ENCODE measurements at regions of chr10 and their contacts with region 1.

Region 1: GRCh38 chr10:62816331-62817120 is at the start of gene EGR2:
- DNase-seq: peak; percentile 97
- H3K4me3 Mint-ChIP-seq: peak within 1 kb of the TSS; percentile 88
- H3K27ac Mint-ChIP-seq: peak within 1 kb of the TSS; percentile 100
- H3K4me1 Mint-ChIP-seq: peaks cover 40% of the 10 kb centered on the region
- H3K27me3 Mint-ChIP-seq: peaks cover 21% of the 10 kb centered on the region
- total RNA-seq, gene EGR2: 66.9 to 68.2 TPM

Region 2: GRCh38 chr10:62437696-62438095 is 378.8 kb before region 1 on chr10:
- CTCF ChIA-PET with region 1: interaction called, 12 read pairs
- POLR2A ChIA-PET with region 1: interaction called, 4 read pairs
- intact Hi-C with region 1: loop called (anchors 2 kb)
- DNase-seq: no peak
- H3K4me3 Mint-ChIP-seq: no peak overlapping the region
- H3K27ac Mint-ChIP-seq: no peak overlapping the region
- H3K4me1 Mint-ChIP-seq: peaks cover 20% of the 10 kb centered on the region
- H3K27me3 Mint-ChIP-seq: peaks cover 3% of the 10 kb centered on the region

Region 3: DNA sequence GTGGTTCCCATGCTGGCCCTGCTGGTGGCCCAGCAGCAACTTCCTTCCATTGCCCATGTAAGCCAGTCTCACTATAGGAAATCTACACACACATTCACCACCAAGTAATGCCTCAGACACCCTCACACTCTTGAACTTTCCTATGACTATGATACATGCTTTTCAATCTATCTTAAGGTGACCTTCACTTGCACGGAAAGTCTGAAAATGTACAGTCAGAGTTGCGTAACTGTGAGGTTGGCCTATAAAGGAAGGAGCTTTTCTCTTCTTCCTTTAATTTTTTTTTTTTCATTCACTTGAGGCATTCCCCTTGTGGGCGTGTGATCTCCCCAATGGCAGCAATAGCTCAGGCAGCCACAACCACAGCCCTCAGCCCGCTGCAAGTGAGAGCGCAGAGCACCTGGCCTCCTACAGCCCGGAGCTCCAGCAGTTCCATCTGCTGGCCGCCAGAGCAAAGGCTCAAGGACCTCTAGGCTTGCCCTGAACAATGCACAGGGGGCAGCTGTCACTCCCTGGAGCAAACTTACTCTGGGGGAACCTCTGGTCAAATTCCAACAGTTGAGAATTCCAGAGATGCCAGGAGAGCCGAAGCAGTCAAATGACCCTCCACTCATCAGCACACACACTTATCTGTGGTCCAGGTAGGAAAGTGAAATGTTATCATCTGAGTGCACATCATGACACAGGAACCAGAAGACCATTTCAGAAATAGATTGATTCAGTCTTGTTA is 135.2 kb before region 1 on chr10:
- CTCF ChIA-PET with region 1: interaction called, 31 read pairs
- POLR2A ChIA-PET with region 1: interaction called, 12 read pairs
- intact Hi-C with region 1: loop called (anchors 1 kb)
- DNase-seq: peak; percentile 92
- H3K4me3 Mint-ChIP-seq: no peak overlapping the region
- H3K27ac Mint-ChIP-seq: peak overlapping the region; percentile 74
- H3K4me1 Mint-ChIP-seq: peaks cover 33% of the 10 kb centered on the region
- H3K27me3 Mint-ChIP-seq: peaks cover 2% of the 10 kb centered on the region

Region 4: DNA sequence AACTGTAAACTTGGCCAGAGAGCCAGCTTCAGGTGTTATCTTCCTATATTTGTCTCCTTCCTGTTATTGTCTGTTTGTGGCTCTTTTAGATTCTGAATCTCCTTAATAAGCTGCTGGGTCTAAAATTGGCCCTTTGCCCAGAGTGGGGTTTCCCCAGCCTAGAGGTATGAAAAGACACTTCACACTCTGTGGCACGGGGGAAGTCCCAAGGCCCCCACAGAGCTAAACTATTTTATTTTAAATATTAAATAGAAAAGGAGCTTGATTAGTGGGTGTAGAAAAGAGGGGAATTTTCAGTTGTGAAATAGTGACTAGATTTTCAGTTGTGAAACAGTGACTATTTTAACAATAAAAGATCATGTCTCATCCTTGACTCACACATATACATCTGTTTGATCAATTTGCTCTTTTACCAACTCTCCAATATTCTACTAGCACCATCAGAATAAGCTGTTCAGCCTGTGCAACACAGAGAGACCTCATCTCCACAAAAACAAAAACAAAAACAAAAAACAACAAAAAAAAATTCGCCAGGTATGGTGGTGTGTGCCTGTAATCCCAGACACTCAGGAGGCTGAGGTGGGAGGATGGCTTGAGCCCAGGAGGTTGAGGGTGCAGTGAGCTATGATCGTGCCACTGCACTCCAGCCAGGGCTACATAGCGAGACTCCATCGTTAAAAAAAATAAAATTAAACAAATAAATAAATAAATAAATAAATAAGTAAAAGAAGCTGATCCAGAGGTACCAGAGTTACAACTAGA is 36.9 kb before region 1 on chr10:
- CTCF ChIA-PET with region 1: interaction called, 12 read pairs
- POLR2A ChIA-PET with region 1: interaction called, 7 read pairs
- intact Hi-C with region 1: loop called (anchors 1 kb)
- DNase-seq: peak; percentile 89
- H3K4me3 Mint-ChIP-seq: no peak overlapping the region
- H3K27ac Mint-ChIP-seq: no peak overlapping the region
- H3K4me1 Mint-ChIP-seq: peaks cover 22% of the 10 kb centered on the region
- H3K27me3 Mint-ChIP-seq: peaks cover 1% of the 10 kb centered on the region

Region 5: GRCh38 chr10:62870866-62871265 is 54.3 kb after region 1 on chr10:
- CTCF ChIA-PET with region 1: no interaction called
- POLR2A ChIA-PET with region 1: no interaction called
- intact Hi-C with region 1: loop called (anchors 2 kb)
- DNase-seq: peak; percentile 68
- H3K4me3 Mint-ChIP-seq: no peak overlapping the region
- H3K27ac Mint-ChIP-seq: no peak overlapping the region
- H3K4me1 Mint-ChIP-seq: peaks cover 30% of the 10 kb centered on the region
- H3K27me3 Mint-ChIP-seq: peaks cover 16% of the 10 kb centered on the region

Region 6: DNA sequence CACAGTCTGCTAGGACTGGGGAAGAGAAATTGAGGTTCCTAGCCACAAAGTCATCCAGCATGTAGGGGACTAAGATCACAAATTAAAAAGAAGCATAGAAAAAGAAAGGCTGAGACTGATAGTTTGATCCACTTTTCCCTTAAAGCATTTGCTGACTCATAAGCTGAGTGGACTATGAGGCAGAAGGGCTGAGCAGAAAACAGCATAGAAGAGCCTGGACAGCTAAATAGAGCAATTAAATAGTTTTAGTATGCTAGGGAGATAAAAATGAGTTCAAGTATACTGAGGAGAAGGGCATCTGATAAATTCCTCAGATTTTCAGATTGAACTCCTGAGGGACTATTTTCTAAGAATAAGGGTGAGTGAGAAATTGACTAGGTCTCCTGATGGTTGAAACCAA is 155.6 kb after region 1 on chr10:
- CTCF ChIA-PET with region 1: no interaction called
- POLR2A ChIA-PET with region 1: no interaction called
- intact Hi-C with region 1: no loop called
- DNase-seq: no peak
- H3K4me3 Mint-ChIP-seq: no peak overlapping the region
- H3K27ac Mint-ChIP-seq: no peak overlapping the region
- H3K4me1 Mint-ChIP-seq: no peaks in the 10 kb centered on the region
- H3K27me3 Mint-ChIP-seq: peaks cover 21% of the 10 kb centered on the region

Region 7: DNA sequence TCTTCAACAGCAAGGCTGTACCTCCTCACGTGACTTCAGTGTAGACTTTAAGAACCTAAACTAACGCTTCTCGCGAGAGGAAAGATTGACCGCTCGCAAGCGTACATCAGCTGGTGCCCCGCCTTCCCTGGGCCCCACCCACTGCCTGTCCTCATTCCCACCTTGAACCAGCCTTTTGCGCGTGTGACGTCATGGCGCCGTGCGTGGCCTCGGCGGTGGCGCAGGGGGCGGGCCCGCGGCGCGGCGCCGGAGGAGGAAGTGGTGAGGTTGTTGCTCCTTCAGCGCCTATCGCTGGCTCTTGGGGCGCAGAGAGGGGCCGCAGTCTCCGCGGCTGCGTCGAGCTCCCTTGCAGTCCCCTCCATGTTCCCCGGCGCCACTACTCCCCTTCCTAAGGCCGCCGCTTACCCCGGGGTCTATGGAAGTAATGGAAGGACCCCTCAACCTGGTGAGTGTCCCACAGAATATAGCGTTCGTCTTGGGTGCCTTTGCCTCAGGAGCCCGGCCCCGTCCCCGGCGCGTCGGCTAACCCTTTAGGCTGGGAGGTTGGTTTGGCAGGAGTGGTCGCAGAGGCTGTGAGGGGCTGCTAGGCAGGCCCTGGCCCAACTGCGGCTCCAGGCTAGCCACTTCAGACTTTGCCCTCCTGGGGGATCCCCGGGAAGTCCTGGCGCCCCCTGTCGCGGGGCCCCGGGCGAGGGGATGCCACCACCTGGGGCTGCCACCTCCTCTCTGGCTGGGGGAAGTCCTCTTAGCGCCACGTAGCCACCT is 316.7 kb after region 1 on chr10 and contains the start of gene NRBF2:
- CTCF ChIA-PET with region 1: interaction called, 12 read pairs
- POLR2A ChIA-PET with region 1: interaction called, 4 read pairs
- intact Hi-C with region 1: loop called (anchors 1 kb)
- DNase-seq: peak; percentile 98
- H3K4me3 Mint-ChIP-seq: peak within 1 kb of the TSS; percentile 89
- H3K27ac Mint-ChIP-seq: peak within 1 kb of the TSS; percentile 91
- H3K4me1 Mint-ChIP-seq: peaks cover 32% of the 10 kb centered on the region
- H3K27me3 Mint-ChIP-seq: peaks cover 3% of the 10 kb centered on the region
- total RNA-seq, gene NRBF2: 21.3 to 21.7 TPM

Region 8: DNA sequence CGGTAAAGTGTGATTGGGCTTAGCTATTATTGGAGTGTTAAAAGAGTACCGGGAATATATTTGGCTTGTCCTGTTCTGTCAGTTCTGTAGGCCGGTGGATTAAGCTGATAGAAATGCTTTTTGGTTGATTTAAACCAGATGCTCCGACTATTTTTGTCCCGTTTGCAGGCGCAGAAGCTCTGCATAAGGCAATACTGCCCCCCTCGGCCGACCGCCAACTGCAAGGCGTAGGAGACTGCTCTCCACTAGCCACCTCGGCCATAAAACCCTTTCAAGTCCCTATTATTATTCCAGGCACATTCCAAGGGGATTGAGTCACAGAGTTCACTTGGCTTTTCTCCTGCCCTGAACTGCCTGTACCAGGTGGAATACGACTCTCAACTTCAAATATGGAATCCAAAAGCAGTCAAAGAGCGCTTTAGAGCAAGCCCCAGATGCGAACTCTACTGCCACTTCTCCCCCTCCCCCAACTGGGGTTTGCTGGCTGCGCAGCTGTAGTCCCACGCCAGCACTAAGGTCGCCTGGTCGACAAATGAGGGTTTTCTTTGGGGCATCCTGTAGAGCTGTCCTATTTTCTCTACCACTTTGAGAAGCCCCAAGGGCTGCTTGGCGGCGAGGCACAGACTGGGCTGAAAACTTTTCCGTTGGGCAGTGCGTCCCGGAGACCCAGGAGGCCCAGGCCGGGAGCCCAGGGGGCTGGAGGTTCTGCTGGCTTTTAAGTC is 813.0 kb after region 1 on chr10:
- CTCF ChIA-PET with region 1: no interaction called
- POLR2A ChIA-PET with region 1: no interaction called
- intact Hi-C with region 1: loop called (anchors 1 kb)
- DNase-seq: peak; percentile 89
- H3K4me3 Mint-ChIP-seq: peak overlapping the region; percentile 90
- H3K27ac Mint-ChIP-seq: peak overlapping the region; percentile 75
- H3K4me1 Mint-ChIP-seq: peaks cover 24% of the 10 kb centered on the region
- H3K27me3 Mint-ChIP-seq: peaks cover 2% of the 10 kb centered on the region

Region 9: DNA sequence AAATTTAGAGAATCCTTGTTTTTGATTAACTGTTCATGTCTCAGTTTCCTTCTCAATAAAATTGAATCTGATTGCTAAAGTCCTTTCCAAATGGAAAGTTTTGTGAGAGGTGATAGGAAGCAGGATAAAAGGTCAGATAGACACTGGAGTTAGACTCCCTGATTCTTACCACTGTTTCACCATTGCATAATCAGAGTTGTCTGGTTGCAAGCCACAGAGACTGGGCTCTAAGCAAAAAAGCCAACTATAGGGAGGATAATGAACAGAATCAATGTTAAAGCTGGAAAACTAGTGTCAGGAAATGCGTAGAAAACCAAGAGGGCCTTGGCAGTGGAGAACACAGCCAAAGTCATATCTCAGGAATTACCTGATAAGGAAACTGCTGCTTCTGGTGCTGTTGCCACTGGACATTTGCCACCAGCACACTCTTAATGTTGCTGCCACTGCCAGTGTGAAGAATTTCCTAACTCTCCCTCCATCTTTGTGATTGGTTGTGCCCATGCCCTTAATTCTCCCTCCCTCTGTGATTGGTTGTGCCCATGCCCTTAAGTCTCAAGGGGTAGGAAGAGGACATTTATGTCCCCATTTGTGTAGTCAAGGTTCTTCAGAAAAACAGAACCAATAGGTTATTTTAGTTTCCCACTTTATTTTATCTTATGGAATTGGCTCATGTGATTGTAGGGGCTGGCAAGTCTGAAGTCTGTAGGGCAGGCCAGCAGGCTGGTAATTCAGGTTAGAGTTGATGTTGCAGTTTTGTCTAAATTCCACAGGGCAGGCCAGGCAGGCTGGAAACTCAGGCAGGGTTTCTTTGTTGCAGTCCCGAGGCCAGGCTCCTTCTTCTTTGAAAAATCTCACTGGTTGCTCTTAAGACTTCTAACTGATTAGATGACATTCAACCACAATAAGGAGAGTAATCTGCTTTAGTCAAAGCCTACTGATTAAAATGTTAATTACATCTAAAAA is 1343.7 kb after region 1 on chr10:
- CTCF ChIA-PET with region 1: no interaction called
- POLR2A ChIA-PET with region 1: no interaction called
- intact Hi-C with region 1: no loop called
- DNase-seq: no peak
- H3K4me3 Mint-ChIP-seq: no peak overlapping the region
- H3K27ac Mint-ChIP-seq: no peak overlapping the region
- H3K4me1 Mint-ChIP-seq: no peaks in the 10 kb centered on the region
- H3K27me3 Mint-ChIP-seq: no peaks in the 10 kb centered on the region

Measured in activated CD4-positive, alpha-beta memory T cell treated with anti-CD3 and anti-CD28 coated beads for 36 hours (primary cell).